ENCODE measurements at regions of chr12 and their contacts with region 1.

Region 1: GRCh38 chr12:53476769-53477209 is 22.5 kb downstream of the MAP3K12 start:
- DNase-seq: no peak
- ATAC-seq: peak in 1 of 4 experiments; percentile 30
- H3K4me3 ChIP-seq: no peak overlapping the region
- H3K4me3 Mint-ChIP-seq: no peak overlapping the region
- H3K27ac ChIP-seq: no peak overlapping the region
- H3K27ac Mint-ChIP-seq: peak overlapping the region in 1 of 2 donors; percentile 48
- H3K4me1 ChIP-seq: peaks cover 0 to 10% of the 10 kb centered on the region in 2 experiments
- H3K4me1 Mint-ChIP-seq: peaks cover 41 to 46% (median 43%) of the 10 kb centered on the region in 3 donors
- H3K27me3 ChIP-seq: no peaks in the 10 kb centered on the region
- H3K27me3 Mint-ChIP-seq: no peaks in the 10 kb centered on the region

Region 2: GRCh38 chr12:53231826-53232645 is 244.8 kb before region 1 on chr12 and contains the start of gene RARG:
- CTCF ChIA-PET with region 1: no interaction called
- POLR2A ChIA-PET with region 1: no interaction called
- DNase-seq: peak in 30 of 35 experiments; percentile 27 to 72 (median 48)
- ATAC-seq: peak; percentile 63 to 72 (median 66)
- H3K4me3 ChIP-seq: peak within 1 kb of the TSS; percentile 50 to 53
- H3K4me3 Mint-ChIP-seq: peak within 1 kb of the TSS; percentile 84 to 93 (median 86)
- H3K27ac ChIP-seq: peak within 1 kb of the TSS; percentile 94
- H3K27ac Mint-ChIP-seq: peak within 1 kb of the TSS; percentile 93 to 94
- H3K4me1 ChIP-seq: peaks cover 24 to 89% of the 10 kb centered on the region in 2 experiments
- H3K4me1 Mint-ChIP-seq: peaks cover 53 to 77% (median 74%) of the 10 kb centered on the region in 3 donors
- H3K27me3 ChIP-seq: no peaks in the 10 kb centered on the region
- H3K27me3 Mint-ChIP-seq: no peaks in the 10 kb centered on the region
- total RNA-seq, gene RARG: 20.3 to 91.3 (median 74.2) TPM

Region 3: GRCh38 chr12:53332744-53333143 is 144.0 kb before region 1 on chr12:
- CTCF ChIA-PET with region 1: no interaction called
- POLR2A ChIA-PET with region 1: interaction called in 1 of 2 experiments, 10 read pairs
- DNase-seq: no peak
- ATAC-seq: no peak
- H3K4me3 ChIP-seq: no peak overlapping the region
- H3K4me3 Mint-ChIP-seq: no peak overlapping the region
- H3K27ac ChIP-seq: no peak overlapping the region
- H3K27ac Mint-ChIP-seq: no peak overlapping the region
- H3K4me1 ChIP-seq: peaks cover 0 to 4% of the 10 kb centered on the region in 2 experiments
- H3K4me1 Mint-ChIP-seq: peaks cover 2 to 5% (median 2%) of the 10 kb centered on the region in 3 donors
- H3K27me3 ChIP-seq: peaks cover 0 to 79% of the 10 kb centered on the region in 2 experiments
- H3K27me3 Mint-ChIP-seq: peaks cover 36 to 47% of the 10 kb centered on the region in 2 donors

Region 4: DNA sequence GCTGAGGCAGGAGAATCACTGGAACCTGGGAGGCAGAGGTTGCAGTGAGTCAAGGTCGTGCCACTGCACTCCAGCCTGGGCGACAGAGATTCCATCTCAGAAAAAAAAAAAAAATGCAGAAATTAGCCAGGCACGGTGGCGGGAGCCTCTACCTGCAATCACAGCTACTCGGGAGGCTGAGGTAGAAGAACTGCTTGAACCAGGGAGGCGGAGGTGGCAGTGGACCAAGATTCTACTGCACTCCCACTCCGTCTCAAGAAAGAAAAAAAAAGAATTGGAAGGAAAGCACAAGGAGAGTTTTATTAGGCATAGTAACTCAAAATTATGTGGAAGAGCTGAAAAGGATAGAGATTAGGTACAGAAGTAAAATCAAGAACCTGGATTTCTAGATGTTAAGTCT is 73.9 kb before region 1 on chr12:
- CTCF ChIA-PET with region 1: interaction called in 1 of 2 experiments, 3 read pairs
- POLR2A ChIA-PET with region 1: interaction called in 1 of 2 experiments, 13 read pairs
- DNase-seq: no peak
- ATAC-seq: no peak
- H3K4me3 ChIP-seq: no peak overlapping the region
- H3K4me3 Mint-ChIP-seq: no peak overlapping the region
- H3K27ac ChIP-seq: no peak overlapping the region
- H3K27ac Mint-ChIP-seq: no peak overlapping the region
- H3K4me1 ChIP-seq: no peaks in the 10 kb centered on the region
- H3K4me1 Mint-ChIP-seq: peaks cover 9 to 14% (median 10%) of the 10 kb centered on the region in 3 donors
- H3K27me3 ChIP-seq: no peaks in the 10 kb centered on the region
- H3K27me3 Mint-ChIP-seq: no peaks in the 10 kb centered on the region

Region 5: GRCh38 chr12:53454710-53455109 is 22.1 kb before region 1 on chr12:
- CTCF ChIA-PET with region 1: interaction called, 3 to 8 read pairs
- POLR2A ChIA-PET with region 1: interaction called, 4 to 10 read pairs
- DNase-seq: no peak
- ATAC-seq: no peak
- H3K4me3 ChIP-seq: no peak overlapping the region
- H3K4me3 Mint-ChIP-seq: peak overlapping the region; percentile 56 to 97 (median 89)
- H3K27ac ChIP-seq: no peak overlapping the region
- H3K27ac Mint-ChIP-seq: no peak overlapping the region
- H3K4me1 ChIP-seq: peaks cover 13 to 17% of the 10 kb centered on the region in 2 experiments
- H3K4me1 Mint-ChIP-seq: peaks cover 35 to 44% (median 41%) of the 10 kb centered on the region in 3 donors
- H3K27me3 ChIP-seq: no peaks in the 10 kb centered on the region
- H3K27me3 Mint-ChIP-seq: no peaks in the 10 kb centered on the region

Region 6: GRCh38 chr12:53508534-53509199 is 31.9 kb after region 1 on chr12:
- CTCF ChIA-PET with region 1: interaction called, 3 to 10 read pairs
- POLR2A ChIA-PET with region 1: interaction called, 3 to 8 read pairs
- DNase-seq: peak; percentile 40 to 88 (median 73)
- ATAC-seq: peak; percentile 91 to 97 (median 96)
- H3K4me3 ChIP-seq: no peak overlapping the region
- H3K4me3 Mint-ChIP-seq: no peak overlapping the region
- H3K27ac ChIP-seq: peak overlapping the region; percentile 36
- H3K27ac Mint-ChIP-seq: peak overlapping the region; percentile 14 to 45
- H3K4me1 ChIP-seq: peaks cover 0 to 9% of the 10 kb centered on the region in 2 experiments
- H3K4me1 Mint-ChIP-seq: peaks cover 9 to 12% (median 11%) of the 10 kb centered on the region in 3 donors
- H3K27me3 ChIP-seq: no peaks in the 10 kb centered on the region
- H3K27me3 Mint-ChIP-seq: no peaks in the 10 kb centered on the region

Measured in T-cell (primary cell).